ENCODE measurements at regions of chr17 and their contacts with region 1.

Region 1: DNA sequence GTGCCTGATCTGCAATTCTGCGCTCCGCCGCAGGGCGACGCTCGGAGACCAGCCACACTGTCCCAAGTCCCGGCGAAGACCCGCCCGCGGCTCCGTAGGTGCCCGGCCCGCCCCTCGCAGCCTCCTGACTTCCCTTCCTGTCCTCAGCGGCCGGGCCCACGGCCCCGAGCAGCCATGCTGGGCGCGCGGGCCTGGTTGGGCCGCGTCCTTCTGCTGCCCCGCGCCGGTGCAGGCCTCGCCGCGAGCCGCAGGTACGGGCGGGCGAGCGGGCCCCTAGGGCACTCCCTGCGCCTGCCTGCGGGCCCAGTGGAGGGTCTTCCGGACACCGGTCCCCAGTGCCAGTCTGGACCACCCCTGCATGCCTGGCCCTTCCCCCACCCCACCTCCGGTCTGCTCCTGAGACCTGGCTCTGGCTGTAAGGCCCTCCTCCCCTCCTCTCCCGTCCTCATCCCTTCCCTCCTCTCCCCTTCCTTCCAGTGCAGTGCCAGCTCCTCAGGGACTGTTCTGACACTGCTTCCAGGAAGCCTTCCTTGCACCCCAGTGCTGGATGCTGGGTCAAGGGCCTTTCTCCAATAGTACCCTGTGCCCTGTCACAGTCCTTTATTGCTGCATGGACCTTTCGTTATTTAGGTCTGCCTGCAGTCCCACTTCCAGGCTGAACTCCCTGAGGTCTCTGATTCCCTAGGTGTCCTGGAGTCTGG is at the start of gene SPATA20:
- DNase-seq: peak; percentile 98
- H3K4me3 ChIP-seq: peak within 1 kb of the TSS; percentile 68 to 73 (median 70)
- H3K27ac ChIP-seq: peak within 1 kb of the TSS; percentile 83 to 87 (median 84)
- H3K4me1 ChIP-seq: peaks cover 28 to 47% (median 37%) of the 10 kb centered on the region in 4 donors
- H3K27me3 ChIP-seq: no peaks in the 10 kb centered on the region
- CTCF ChIP-seq: peak; percentile 97 to 100 (median 100)
- EP300 ChIP-seq: no peak
- POLR2A ChIP-seq: peak; percentile 84
- total RNA-seq, gene SPATA20: 44.1 to 64.4 (median 54.6) TPM

Region 2: GRCh38 chr17:50129728-50130558 is 417.2 kb before region 1 on chr17 and contains the start of gene SAMD14:
- intact Hi-C with region 1: no loop called
- DNase-seq: no peak
- H3K4me3 ChIP-seq: peak within 1 kb of the TSS; percentile 54 to 68 (median 60)
- H3K27ac ChIP-seq: peak within 1 kb of the TSS in 2 of 4 donors; percentile 18 to 28
- H3K4me1 ChIP-seq: peaks cover 35 to 54% (median 51%) of the 10 kb centered on the region in 4 donors
- H3K27me3 ChIP-seq: peaks cover 0 to 18% (median 4%) of the 10 kb centered on the region in 4 donors
- CTCF ChIP-seq: no peak
- EP300 ChIP-seq: no peak
- POLR2A ChIP-seq: no peak
- total RNA-seq, gene SAMD14: 0.98 to 1.8 (median 1.5) TPM

Region 3: GRCh38 chr17:50593321-50593720 is 46.1 kb after region 1 on chr17:
- intact Hi-C with region 1: no loop called
- DNase-seq: no peak
- H3K4me3 ChIP-seq: no peak overlapping the region
- H3K27ac ChIP-seq: no peak overlapping the region
- H3K4me1 ChIP-seq: peaks cover 19 to 25% (median 22%) of the 10 kb centered on the region in 4 donors
- H3K27me3 ChIP-seq: no peaks in the 10 kb centered on the region
- CTCF ChIP-seq: no peak
- EP300 ChIP-seq: no peak
- POLR2A ChIP-seq: no peak

Region 4: GRCh38 chr17:50626037-50626574 is 78.9 kb after region 1 on chr17:
- intact Hi-C with region 1: loop called (anchors 2 kb)
- DNase-seq: no peak
- H3K4me3 ChIP-seq: no peak overlapping the region
- H3K27ac ChIP-seq: no peak overlapping the region
- H3K4me1 ChIP-seq: peaks cover 0 to 11% (median 8%) of the 10 kb centered on the region in 4 donors
- H3K27me3 ChIP-seq: peaks cover 0 to 67% (median 5%) of the 10 kb centered on the region in 4 donors
- CTCF ChIP-seq: peak; percentile 67 to 69 (median 69)
- EP300 ChIP-seq: no peak
- POLR2A ChIP-seq: no peak

Region 5: DNA sequence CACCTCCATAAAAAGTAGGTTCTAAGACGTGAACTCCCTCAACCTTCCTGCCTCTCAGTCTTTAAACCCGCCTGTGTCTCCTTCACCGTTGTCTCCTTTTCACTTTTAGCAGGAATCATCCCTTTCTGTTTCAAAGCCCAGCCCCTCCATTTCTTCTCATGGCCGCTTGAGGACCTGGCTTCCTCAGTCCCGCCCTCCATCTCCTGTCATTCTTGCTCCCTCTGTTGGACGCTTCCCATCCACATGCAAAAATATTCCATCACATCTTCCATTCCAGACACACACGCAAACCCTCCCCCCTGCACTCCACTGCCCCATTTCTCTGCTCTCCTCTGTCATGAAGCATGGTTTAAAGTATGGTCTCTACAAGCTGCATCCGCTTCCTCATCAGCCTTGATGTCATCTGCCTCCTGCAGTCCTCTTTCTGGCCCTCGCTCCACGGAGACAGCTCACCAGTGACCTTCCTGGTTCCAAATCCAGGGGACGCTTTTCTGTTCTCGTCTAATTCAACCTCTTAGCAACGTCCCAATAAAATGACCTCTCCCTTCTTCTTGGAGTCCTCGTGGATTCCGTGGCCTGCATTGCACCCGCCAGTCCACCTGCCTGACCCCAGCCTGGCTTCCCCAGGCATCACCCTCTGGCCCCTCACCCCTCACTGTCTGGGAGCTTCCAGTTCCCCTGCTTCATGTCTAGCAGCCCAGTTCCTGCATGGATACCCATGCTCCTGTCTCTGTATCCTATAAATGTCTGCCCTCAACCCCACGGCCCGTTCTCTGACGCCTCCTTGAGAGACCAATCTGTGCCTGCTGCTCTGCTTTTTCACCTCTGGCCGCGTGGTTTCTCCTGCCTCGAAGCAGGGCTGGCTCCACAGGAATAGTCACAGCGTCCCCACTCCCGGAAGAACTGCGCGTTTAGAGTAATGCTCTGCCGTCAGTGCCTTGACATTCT is 134.4 kb after region 1 on chr17:
- intact Hi-C with region 1: loop called (anchors 5 kb)
- DNase-seq: peak; percentile 94
- H3K4me3 ChIP-seq: peak overlapping the region in 2 of 4 donors; percentile 8 to 11
- H3K27ac ChIP-seq: peak overlapping the region in 2 of 4 donors; percentile 9 to 48
- H3K4me1 ChIP-seq: peaks cover 9 to 27% (median 22%) of the 10 kb centered on the region in 4 donors
- H3K27me3 ChIP-seq: no peaks in the 10 kb centered on the region
- CTCF ChIP-seq: peak; percentile 49 to 57 (median 56)
- EP300 ChIP-seq: no peak
- POLR2A ChIP-seq: no peak

Region 6: DNA sequence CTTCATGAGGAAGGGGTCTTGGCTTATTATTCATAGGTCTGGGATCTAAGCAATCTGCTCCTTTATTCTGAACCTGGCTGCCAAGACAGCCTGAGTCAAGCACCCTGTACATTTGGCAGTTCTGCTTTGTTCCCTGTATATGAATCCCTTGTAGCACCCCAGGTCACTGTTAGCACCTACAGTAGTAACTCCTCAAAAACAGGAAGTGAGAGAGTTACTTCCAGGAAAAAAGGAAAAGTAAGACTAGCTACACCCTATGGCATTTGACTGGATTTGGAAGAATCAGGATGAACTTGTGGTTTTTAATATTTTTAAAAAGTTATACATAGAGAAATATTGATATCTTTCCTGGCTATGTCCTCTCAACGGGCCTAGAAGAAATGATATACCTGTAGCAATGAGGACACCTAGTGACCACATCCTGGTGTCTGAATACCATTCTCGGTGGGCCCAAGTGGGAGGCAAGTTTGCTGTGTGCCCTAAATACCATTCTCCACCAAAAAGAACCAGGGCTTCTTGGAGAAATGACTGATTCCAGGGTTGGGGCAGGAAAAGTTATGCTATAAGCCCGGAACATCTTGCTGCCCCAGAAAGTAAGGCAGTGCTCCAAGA is 150.6 kb after region 1 on chr17:
- intact Hi-C with region 1: loop called (anchors 2 kb)
- DNase-seq: no peak
- H3K4me3 ChIP-seq: no peak overlapping the region
- H3K27ac ChIP-seq: no peak overlapping the region
- H3K4me1 ChIP-seq: peaks cover 14 to 52% (median 45%) of the 10 kb centered on the region in 4 donors
- H3K27me3 ChIP-seq: no peaks in the 10 kb centered on the region
- CTCF ChIP-seq: no peak
- EP300 ChIP-seq: no peak
- POLR2A ChIP-seq: no peak

Region 7: GRCh38 chr17:50841949-50842354 is 294.8 kb after region 1 on chr17:
- intact Hi-C with region 1: loop called (anchors 2 kb)
- DNase-seq: no peak
- H3K4me3 ChIP-seq: no peak overlapping the region
- H3K27ac ChIP-seq: no peak overlapping the region
- H3K4me1 ChIP-seq: peaks cover 0 to 8% (median 7%) of the 10 kb centered on the region in 4 donors
- H3K27me3 ChIP-seq: no peaks in the 10 kb centered on the region
- CTCF ChIP-seq: peak; percentile 81 to 86 (median 85)
- EP300 ChIP-seq: no peak
- POLR2A ChIP-seq: no peak

Region 8: GRCh38 chr17:50949989-50950881 is 403.1 kb after region 1 on chr17:
- intact Hi-C with region 1: loop called (anchors 10 kb)
- DNase-seq: peak; percentile 96
- H3K4me3 ChIP-seq: peak overlapping the region; percentile 8 to 40 (median 18)
- H3K27ac ChIP-seq: peak overlapping the region; percentile 89 to 90 (median 90)
- H3K4me1 ChIP-seq: peaks cover 47 to 73% (median 68%) of the 10 kb centered on the region in 4 donors
- H3K27me3 ChIP-seq: no peaks in the 10 kb centered on the region
- CTCF ChIP-seq: peak; percentile 79 to 89 (median 87)
- EP300 ChIP-seq: peak; percentile 24
- POLR2A ChIP-seq: no peak

Measured in esophagus muscularis mucosa (tissue), 4 donors.